ENCODE measurements at regions of chr15 and their contacts with region 1.

Region 1: GRCh38 chr15:84658080-84658787 is at the start of gene NMB:
- DNase-seq: no peak
- H3K4me3 ChIP-seq: peak within 1 kb of the TSS; percentile 62 to 79 (median 73)
- H3K27ac ChIP-seq: peak within 1 kb of the TSS; percentile 83 to 90 (median 88)
- H3K4me1 ChIP-seq: peaks cover 21 to 38% (median 31%) of the 10 kb centered on the region in 4 donors
- H3K27me3 ChIP-seq: no peaks in the 10 kb centered on the region
- CTCF ChIP-seq: peak; percentile 68 to 80 (median 71)
- EP300 ChIP-seq: no peak
- POLR2A ChIP-seq: no peak
- total RNA-seq, gene NMB: 3.6 to 7.4 (median 5.1) TPM

Region 2: DNA sequence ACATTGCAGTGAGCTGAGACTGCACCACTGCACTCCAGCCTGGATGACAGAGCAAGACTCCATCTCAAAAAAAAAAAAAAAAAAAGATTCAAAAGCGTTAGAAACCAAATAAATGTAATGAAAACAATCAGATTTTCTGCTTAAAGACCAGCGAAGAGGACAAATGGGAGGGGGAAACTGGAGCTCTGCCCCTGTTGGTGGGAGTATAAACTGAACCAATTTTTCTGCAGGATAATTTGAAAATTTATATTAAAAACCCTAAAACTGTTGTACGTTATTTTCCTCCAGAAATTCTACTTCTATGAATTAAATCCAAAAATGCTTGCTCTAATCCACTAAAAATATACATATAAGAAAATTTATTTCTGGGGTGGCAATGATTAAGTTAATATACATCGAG is 82.7 kb before region 1 on chr15:
- intact Hi-C with region 1: no loop called
- DNase-seq: no peak
- H3K4me3 ChIP-seq: no peak overlapping the region
- H3K27ac ChIP-seq: no peak overlapping the region
- H3K4me1 ChIP-seq: peaks cover 0 to 13% (median 6%) of the 10 kb centered on the region in 4 donors
- H3K27me3 ChIP-seq: no peaks in the 10 kb centered on the region
- CTCF ChIP-seq: no peak
- EP300 ChIP-seq: no peak
- POLR2A ChIP-seq: no peak

Region 3: DNA sequence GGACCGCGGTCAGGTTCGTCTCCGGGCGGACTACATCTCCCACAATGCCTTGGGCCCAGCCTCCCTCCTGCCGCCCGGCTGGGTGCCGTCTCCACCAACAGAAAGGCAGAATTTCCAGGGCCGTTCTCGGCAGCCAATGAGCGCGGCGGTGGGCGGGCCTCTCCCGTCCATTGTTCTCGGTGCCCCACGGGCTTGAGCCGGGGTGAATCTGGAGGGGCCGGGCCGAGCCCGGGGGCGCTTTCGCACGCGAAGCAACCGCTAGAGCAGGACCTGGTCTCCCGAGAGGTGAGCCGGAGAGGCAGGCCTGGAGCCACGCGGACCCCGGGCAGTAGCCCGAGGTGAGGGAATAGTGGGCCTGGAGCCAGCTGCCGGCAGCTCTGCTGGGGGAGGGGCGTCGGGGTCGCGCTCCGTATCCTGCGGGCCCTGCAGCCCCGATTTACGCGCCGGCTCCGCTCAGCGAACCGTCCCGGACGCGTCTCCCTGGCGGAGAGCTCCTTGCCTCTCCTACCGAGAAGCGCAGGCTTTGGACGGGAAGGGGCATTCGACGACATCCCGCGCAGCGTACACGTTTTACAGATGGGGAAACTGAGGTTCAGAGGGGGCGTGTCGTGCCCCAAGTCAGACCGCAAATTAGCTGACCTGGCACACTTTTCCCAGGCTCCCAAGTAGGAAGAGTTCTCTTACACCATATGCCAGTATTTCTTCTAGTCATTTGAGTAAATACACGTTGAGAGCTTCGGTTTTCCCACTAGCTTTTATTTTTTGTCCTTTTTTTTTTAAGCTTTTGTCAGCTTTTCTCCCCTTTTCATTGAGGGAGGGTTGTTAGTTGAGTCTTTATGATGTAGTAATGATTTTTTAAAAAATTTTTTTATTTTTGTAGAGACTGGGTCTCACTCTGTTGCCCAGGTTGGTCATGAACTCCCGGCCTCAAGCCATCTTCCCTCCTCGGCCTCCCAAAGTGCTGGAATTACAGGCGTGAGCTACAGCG is 57.1 kb before region 1 on chr15 and contains the start of gene ZSCAN2:
- intact Hi-C with region 1: loop called (anchors 2 kb)
- DNase-seq: peak; percentile 99
- H3K4me3 ChIP-seq: peak within 1 kb of the TSS; percentile 66 to 84 (median 78)
- H3K27ac ChIP-seq: peak within 1 kb of the TSS; percentile 57 to 79 (median 72)
- H3K4me1 ChIP-seq: peaks cover 8 to 40% (median 24%) of the 10 kb centered on the region in 4 donors
- H3K27me3 ChIP-seq: no peaks in the 10 kb centered on the region
- CTCF ChIP-seq: no peak
- EP300 ChIP-seq: no peak
- POLR2A ChIP-seq: no peak
- total RNA-seq, gene ZSCAN2: 4.6 to 9.5 (median 7.7) TPM

Region 4: GRCh38 chr15:84716036-84716799 is 58.0 kb after region 1 on chr15 and contains the start of gene SEC11A:
- intact Hi-C with region 1: loop called (anchors 5 kb)
- DNase-seq: peak; percentile 98
- H3K4me3 ChIP-seq: peak within 1 kb of the TSS; percentile 67 to 97 (median 84)
- H3K27ac ChIP-seq: peak within 1 kb of the TSS; percentile 86 to 95 (median 92)
- H3K4me1 ChIP-seq: peaks cover 28 to 47% (median 31%) of the 10 kb centered on the region in 4 donors
- H3K27me3 ChIP-seq: no peaks in the 10 kb centered on the region
- CTCF ChIP-seq: no peak
- EP300 ChIP-seq: no peak
- POLR2A ChIP-seq: peak; percentile 49
- total RNA-seq, gene SEC11A: 57.4 to 90.3 (median 73.5) TPM

Measured in esophagus muscularis mucosa (tissue), 4 donors.